Right ventricle myocardium inferior (tissue), 1 donor: ENCODE measurements at regions of chr12 and their contacts with region 1.

Region 1: GRCh38 chr12:76685246-76685678 is 78.7 kb upstream of the ZDHHC17 start:
- DNase-seq: peak; percentile 71
- ATAC-seq: peak; percentile 91

Region 2: DNA sequence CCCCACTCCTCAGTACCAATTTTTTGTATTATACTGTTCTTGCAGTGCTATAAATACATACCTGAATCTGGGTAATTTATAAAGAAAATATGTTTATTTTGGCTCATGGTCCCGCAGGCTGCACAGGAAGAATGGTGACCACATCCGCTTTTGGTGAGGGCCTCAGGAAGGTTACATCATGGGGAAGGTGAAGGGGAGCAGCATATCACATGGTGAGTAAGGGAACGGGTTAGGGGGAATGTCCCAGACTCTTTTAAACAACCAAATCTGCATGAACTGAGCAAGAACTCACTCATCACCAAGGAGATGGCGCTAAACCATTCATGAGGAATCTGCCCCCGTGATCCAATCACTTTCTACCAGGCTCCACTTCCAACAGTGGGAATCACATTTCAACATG is 165.7 kb before region 1 on chr12:
- intact Hi-C with region 1: no loop called
- DNase-seq: no peak
- ATAC-seq: no peak

Region 3: DNA sequence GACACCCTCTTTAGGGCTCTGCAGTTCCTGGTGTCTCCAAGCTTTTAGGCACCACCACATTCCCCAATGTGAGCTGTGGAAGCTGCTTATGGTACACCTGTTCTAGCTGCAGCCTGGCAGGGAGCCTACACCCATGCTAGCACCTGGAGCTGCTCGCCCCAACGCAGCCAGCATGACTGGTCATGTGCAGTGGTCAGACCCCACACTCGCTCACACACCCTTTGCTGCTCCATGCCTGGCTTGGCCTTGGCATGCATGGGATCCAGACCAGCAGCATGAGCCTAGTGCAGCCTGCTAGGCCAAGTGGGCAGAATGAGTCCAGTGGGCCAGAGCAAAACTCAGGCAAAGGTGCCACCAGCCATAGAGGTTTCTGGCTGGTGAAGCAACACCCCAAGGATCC is 39.3 kb before region 1 on chr12:
- intact Hi-C with region 1: no loop called
- DNase-seq: peak; percentile 60
- ATAC-seq: no peak

Region 4: DNA sequence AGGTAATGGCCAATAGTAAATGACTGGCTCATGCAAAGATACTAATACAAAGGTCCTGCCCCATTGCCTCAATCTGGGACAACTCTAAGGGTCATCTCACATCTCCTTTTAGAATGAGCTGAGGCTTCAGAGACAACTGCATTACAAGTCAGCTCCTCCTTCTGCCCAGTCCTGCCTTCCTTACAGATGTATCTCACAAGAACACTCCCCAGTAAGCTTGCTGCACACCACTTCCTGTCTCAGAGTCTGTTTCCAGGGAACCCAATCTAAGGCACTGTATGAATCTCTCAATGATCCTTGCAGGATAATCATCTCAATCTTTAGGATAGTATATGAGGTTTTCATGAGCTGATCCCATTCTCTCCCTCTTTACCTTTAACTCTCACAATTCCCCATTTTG is 20.8 kb after region 1 on chr12:
- intact Hi-C with region 1: no loop called
- DNase-seq: no peak
- ATAC-seq: no peak

Region 5: GRCh38 chr12:76763743-76764675 is 78.7 kb after region 1 on chr12 and contains the start of gene ZDHHC17:
- intact Hi-C with region 1: loop called (anchors 1 kb)
- DNase-seq: peak; percentile 96
- ATAC-seq: peak; percentile 97
- total RNA-seq, gene ZDHHC17: 18.0 TPM